ENCODE measurements at regions of chr10 and their contacts with region 1.

Region 1: GRCh38 chr10:114970515-114970914 is 32.5 kb downstream of the TRUB1 start:
- DNase-seq: peak; percentile 8
- ATAC-seq: peak; percentile 76
- H3K4me3 ChIP-seq: no peak overlapping the region
- H3K27ac ChIP-seq: no peak overlapping the region
- H3K4me1 ChIP-seq: no peaks in the 10 kb centered on the region
- H3K27me3 ChIP-seq: no peaks in the 10 kb centered on the region
- CTCF ChIP-seq: no peak
- POLR2A ChIP-seq: no peak
- RAD21 ChIP-seq: no peak

Region 2: DNA sequence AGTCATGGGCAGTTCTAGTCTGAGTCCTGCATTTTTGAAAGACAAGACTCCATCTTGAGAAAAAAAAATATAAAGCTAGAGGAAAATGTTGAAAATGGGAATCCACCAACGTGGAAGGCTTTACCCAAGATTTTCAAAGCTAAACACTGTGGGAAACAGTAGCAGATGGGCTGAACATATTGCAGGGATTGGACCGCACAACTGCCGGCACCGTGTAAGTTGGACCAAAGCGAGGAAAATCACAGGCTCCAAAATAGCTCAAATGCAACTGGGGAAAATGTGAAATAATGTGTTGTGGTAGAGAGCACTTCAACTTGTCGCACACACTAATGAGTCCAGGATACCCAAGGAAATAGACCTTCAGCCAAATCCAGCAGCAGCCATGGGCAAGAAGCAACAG is 953.2 kb before region 1 on chr10:
- CTCF ChIA-PET with region 1: no interaction called
- POLR2A ChIA-PET with region 1: no interaction called
- dilution Hi-C with region 1: no loop called
- in situ Hi-C with region 1: no loop called
- intact Hi-C with region 1: no loop called
- DNase-seq: no peak
- ATAC-seq: no peak
- H3K4me3 ChIP-seq: no peak overlapping the region
- H3K27ac ChIP-seq: no peak overlapping the region
- H3K4me1 ChIP-seq: no peaks in the 10 kb centered on the region
- H3K27me3 ChIP-seq: peaks cover 8% of the 10 kb centered on the region
- CTCF ChIP-seq: no peak
- POLR2A ChIP-seq: no peak
- RAD21 ChIP-seq: no peak

Region 3: GRCh38 chr10:114893251-114893650 is 77.3 kb before region 1 on chr10:
- CTCF ChIA-PET with region 1: interaction called, 10 read pairs
- POLR2A ChIA-PET with region 1: no interaction called
- dilution Hi-C with region 1: no loop called
- in situ Hi-C with region 1: no loop called
- intact Hi-C with region 1: no loop called
- DNase-seq: peak; percentile 15
- ATAC-seq: no peak
- H3K4me3 ChIP-seq: no peak overlapping the region
- H3K27ac ChIP-seq: no peak overlapping the region
- H3K4me1 ChIP-seq: no peaks in the 10 kb centered on the region
- H3K27me3 ChIP-seq: no peaks in the 10 kb centered on the region
- CTCF ChIP-seq: no peak
- POLR2A ChIP-seq: no peak
- RAD21 ChIP-seq: no peak

Measured in IMR-90 (cell line).